Naive thymus-derived CD4-positive, alpha-beta T cell (primary cell): ENCODE measurements at regions of chr5 and their contacts with region 1.

Region 1: DNA sequence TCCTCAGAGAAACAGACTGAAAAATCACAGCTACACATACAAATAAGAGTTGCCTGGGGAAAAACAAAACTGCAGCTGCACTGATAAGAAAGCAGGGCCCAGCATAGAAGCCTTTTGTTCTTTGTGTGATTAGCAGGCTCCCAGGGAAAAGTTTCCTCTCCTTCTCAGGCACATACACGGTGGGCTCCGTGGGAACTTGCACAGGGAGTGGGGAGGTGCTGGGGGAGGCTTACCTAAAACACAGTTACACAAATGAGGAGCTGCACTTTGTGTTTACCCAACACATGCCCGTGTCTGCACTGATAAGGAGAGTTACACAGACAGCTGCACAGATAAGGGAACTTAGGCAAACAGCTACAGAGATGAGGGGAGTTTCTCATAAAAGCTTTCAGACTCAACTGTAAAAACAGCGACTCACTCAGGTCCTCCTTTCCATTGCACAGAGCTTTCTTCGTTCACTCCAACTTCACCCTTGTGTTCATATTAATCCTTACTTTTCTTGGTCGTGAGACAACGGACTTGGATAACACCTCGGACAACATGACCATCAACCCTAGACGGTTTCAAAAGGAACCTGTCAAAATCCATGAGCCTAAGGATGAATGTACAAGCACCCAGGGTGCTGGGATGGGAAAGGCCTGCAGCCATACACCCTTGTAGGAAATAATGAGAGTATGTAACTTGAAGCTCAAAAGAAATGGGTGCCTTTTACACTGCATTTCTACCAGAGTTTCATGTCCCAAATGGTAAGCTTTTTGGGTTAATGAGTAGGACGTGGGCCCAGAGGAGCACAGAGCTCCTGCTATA is 50.8 kb downstream of the SERINC5 start:
- DNase-seq: peak in 6 of 9 donors; percentile 44 to 59 (median 49)
- ATAC-seq: peak; percentile 88
- H3K4me3 ChIP-seq: no peak overlapping the region
- H3K4me3 Mint-ChIP-seq: peak overlapping the region in 9 of 10 donors; percentile 58 to 82 (median 73)
- H3K27ac ChIP-seq: peak overlapping the region; percentile 54
- H3K27ac Mint-ChIP-seq: peak overlapping the region; percentile 46 to 99 (median 90)
- H3K4me1 ChIP-seq: peaks cover 10 to 74% of the 10 kb centered on the region in 2 donors
- H3K4me1 Mint-ChIP-seq: peaks cover 45 to 99% (median 91%) of the 10 kb centered on the region in 7 donors
- H3K27me3 ChIP-seq: no peaks in the 10 kb centered on the region
- H3K27me3 Mint-ChIP-seq: no peaks in the 10 kb centered on the region

Region 2: GRCh38 chr5:80125962-80126480 is 79.0 kb before region 1 on chr5:
- CTCF ChIA-PET with region 1: interaction called, 10 read pairs
- POLR2A ChIA-PET with region 1: interaction called, 3 read pairs
- intact Hi-C with region 1: no loop called
- DNase-seq: peak in 3 of 9 donors; percentile 19 to 38 (median 36)
- ATAC-seq: peak; percentile 73
- H3K4me3 ChIP-seq: no peak overlapping the region
- H3K4me3 Mint-ChIP-seq: peak overlapping the region in 8 of 10 donors; percentile 15 to 71 (median 38)
- H3K27ac ChIP-seq: no peak overlapping the region
- H3K27ac Mint-ChIP-seq: peak overlapping the region; percentile 45 to 84 (median 74)
- H3K4me1 ChIP-seq: peaks cover 11 to 25% of the 10 kb centered on the region in 2 donors
- H3K4me1 Mint-ChIP-seq: peaks cover 34 to 80% (median 63%) of the 10 kb centered on the region in 7 donors
- H3K27me3 ChIP-seq: no peaks in the 10 kb centered on the region
- H3K27me3 Mint-ChIP-seq: no peaks in the 10 kb centered on the region

Region 3: GRCh38 chr5:80134879-80135278 is 70.1 kb before region 1 on chr5:
- CTCF ChIA-PET with region 1: interaction called, 12 read pairs
- POLR2A ChIA-PET with region 1: interaction called, 8 read pairs
- intact Hi-C with region 1: loop called in 1 of 2 experiments (anchors 1 kb)
- DNase-seq: no peak
- ATAC-seq: no peak
- H3K4me3 ChIP-seq: no peak overlapping the region
- H3K4me3 Mint-ChIP-seq: peak overlapping the region in 8 of 10 donors; percentile 34 to 83 (median 76)
- H3K27ac ChIP-seq: peak overlapping the region; percentile 72
- H3K27ac Mint-ChIP-seq: peak overlapping the region; percentile 83 to 96 (median 92)
- H3K4me1 ChIP-seq: peaks cover 52 to 88% of the 10 kb centered on the region in 2 donors
- H3K4me1 Mint-ChIP-seq: peaks cover 60 to 97% (median 82%) of the 10 kb centered on the region in 7 donors
- H3K27me3 ChIP-seq: no peaks in the 10 kb centered on the region
- H3K27me3 Mint-ChIP-seq: no peaks in the 10 kb centered on the region